Activated CD4-positive, alpha-beta T cell treated with anti-CD3 and anti-CD28 coated beads for 36 hours (primary cell): ENCODE measurements at regions of chr11 and their contacts with region 1.

Region 1: GRCh38 chr11:118791111-118791965 is at the start of gene DDX6:
- DNase-seq: peak; percentile 96
- ATAC-seq: peak; percentile 47
- H3K4me3 Mint-ChIP-seq: peak within 1 kb of the TSS; percentile 87
- H3K27ac Mint-ChIP-seq: peak within 1 kb of the TSS; percentile 93
- H3K4me1 Mint-ChIP-seq: peaks cover 26% of the 10 kb centered on the region
- H3K27me3 Mint-ChIP-seq: no peaks in the 10 kb centered on the region
- total RNA-seq, gene DDX6: 175 to 178 TPM

Region 2: DNA sequence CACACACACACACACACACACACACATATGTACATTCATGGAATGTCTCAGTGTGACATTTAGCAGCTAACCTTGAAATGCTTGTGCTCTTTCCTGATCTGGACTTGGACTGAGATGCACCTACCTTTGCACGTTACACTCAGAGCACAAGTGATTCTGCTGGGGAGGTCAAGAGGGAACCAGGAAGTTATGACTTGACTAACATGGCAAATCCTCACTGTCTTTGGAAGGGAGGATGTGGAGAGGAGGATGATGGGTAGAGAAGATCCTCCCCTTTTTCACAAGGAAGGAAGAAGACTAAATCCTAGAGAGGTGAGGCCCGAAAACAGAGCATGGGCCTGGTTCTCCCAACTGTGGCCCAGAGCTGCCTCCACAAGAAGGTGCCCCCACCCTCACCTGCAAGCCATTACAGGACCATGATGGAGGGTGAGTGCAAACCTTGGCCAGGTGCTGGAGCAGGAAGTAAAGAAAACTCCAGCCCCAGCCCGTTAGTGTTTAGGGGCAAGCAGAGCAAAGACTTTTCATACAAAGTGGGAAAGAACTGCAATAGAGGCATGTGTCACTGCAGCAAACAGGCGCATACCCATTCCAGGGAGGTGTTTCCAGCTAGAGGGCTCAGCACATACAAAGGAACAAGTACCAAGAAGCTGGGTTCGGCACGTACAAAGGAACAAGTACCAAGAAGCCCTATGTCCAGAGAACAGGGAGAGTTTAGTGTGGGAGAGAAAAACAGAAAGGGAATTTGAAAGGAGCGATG is 665.1 kb before region 1 on chr11:
- CTCF ChIA-PET with region 1: no interaction called
- POLR2A ChIA-PET with region 1: no interaction called
- intact Hi-C with region 1: no loop called
- DNase-seq: peak; percentile 20
- ATAC-seq: peak; percentile 78
- H3K4me3 Mint-ChIP-seq: no peak overlapping the region
- H3K27ac Mint-ChIP-seq: no peak overlapping the region
- H3K4me1 Mint-ChIP-seq: no peaks in the 10 kb centered on the region
- H3K27me3 Mint-ChIP-seq: peaks cover 2% of the 10 kb centered on the region

Region 3: GRCh38 chr11:118227865-118228785 is 563.2 kb before region 1 on chr11:
- CTCF ChIA-PET with region 1: no interaction called
- POLR2A ChIA-PET with region 1: no interaction called
- intact Hi-C with region 1: loop called in 1 of 2 experiments (anchors 5 kb)
- DNase-seq: no peak
- ATAC-seq: no peak
- H3K4me3 Mint-ChIP-seq: peak overlapping the region; percentile 15
- H3K27ac Mint-ChIP-seq: no peak overlapping the region
- H3K4me1 Mint-ChIP-seq: peaks cover 49% of the 10 kb centered on the region
- H3K27me3 Mint-ChIP-seq: no peaks in the 10 kb centered on the region

Region 4: GRCh38 chr11:118771547-118772288 is 19.6 kb before region 1 on chr11:
- CTCF ChIA-PET with region 1: interaction called, 10 read pairs
- POLR2A ChIA-PET with region 1: interaction called, 4 read pairs
- intact Hi-C with region 1: no loop called
- DNase-seq: no peak
- ATAC-seq: no peak
- H3K4me3 Mint-ChIP-seq: no peak overlapping the region
- H3K27ac Mint-ChIP-seq: peak overlapping the region; percentile 85
- H3K4me1 Mint-ChIP-seq: peaks cover 72% of the 10 kb centered on the region
- H3K27me3 Mint-ChIP-seq: no peaks in the 10 kb centered on the region

Region 5: GRCh38 chr11:118878163-118878563 is 86.8 kb after region 1 on chr11:
- CTCF ChIA-PET with region 1: interaction called, 22 read pairs
- POLR2A ChIA-PET with region 1: interaction called, 62 read pairs
- intact Hi-C with region 1: loop called (anchors 1 to 2 kb)
- DNase-seq: peak; percentile 54
- ATAC-seq: peak; percentile 17
- H3K4me3 Mint-ChIP-seq: peak overlapping the region; percentile 36
- H3K27ac Mint-ChIP-seq: peak overlapping the region; percentile 98
- H3K4me1 Mint-ChIP-seq: peaks cover 97% of the 10 kb centered on the region
- H3K27me3 Mint-ChIP-seq: no peaks in the 10 kb centered on the region

Region 6: DNA sequence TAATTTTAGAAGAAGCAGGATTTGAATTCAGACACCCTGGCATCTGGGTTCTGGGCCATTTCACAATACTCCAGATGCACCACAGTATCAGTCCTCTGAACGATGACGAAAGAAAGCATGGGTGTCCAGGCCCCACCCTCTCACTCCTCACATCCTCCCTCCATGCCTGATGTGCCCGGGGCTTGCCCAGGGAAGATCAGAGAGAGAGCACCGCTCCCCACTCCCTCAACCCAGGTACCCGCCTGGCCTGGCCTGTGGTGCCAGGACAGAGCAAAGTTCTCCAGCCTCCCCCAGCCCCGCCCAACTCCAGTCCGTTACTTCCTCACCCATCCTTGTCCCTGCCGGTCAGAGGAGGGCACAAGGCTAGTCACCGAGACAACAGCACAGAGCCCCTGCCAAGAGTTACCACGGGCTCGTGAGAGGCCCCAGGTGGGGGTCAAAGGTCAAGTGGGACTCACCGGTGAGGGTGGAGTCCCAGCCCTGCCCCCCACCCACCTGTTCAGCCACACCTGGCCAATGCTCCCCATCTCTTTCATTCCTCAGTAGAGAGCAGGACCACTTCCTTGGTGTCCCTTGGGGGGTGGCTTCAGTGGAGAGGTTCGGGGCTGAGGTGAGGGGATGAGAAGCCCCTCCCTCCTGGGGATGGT is 126.3 kb after region 1 on chr11:
- CTCF ChIA-PET with region 1: interaction called, 9 read pairs
- POLR2A ChIA-PET with region 1: interaction called, 10 read pairs
- intact Hi-C with region 1: no loop called
- DNase-seq: peak; percentile 81
- ATAC-seq: peak; percentile 48
- H3K4me3 Mint-ChIP-seq: peak overlapping the region; percentile 86
- H3K27ac Mint-ChIP-seq: peak overlapping the region; percentile 100
- H3K4me1 Mint-ChIP-seq: peaks cover 84% of the 10 kb centered on the region
- H3K27me3 Mint-ChIP-seq: no peaks in the 10 kb centered on the region

Region 7: GRCh38 chr11:119018074-119018938 is 227.0 kb after region 1 on chr11 and contains the starts of genes RPS25 and TRAPPC4:
- CTCF ChIA-PET with region 1: interaction called, 8 read pairs
- POLR2A ChIA-PET with region 1: no interaction called
- intact Hi-C with region 1: loop called in 1 of 2 experiments (anchors 1 kb)
- DNase-seq: peak; percentile 98
- ATAC-seq: peak; percentile 92
- H3K4me3 Mint-ChIP-seq: peak within 1 kb of the TSS; percentile 99
- H3K27ac Mint-ChIP-seq: peak within 1 kb of the TSS; percentile 99
- H3K4me1 Mint-ChIP-seq: peaks cover 53% of the 10 kb centered on the region
- H3K27me3 Mint-ChIP-seq: no peaks in the 10 kb centered on the region
- total RNA-seq, gene RPS25: 1,590 to 1,820 TPM
- total RNA-seq, gene TRAPPC4: 62.2 to 81.9 TPM

Region 8: DNA sequence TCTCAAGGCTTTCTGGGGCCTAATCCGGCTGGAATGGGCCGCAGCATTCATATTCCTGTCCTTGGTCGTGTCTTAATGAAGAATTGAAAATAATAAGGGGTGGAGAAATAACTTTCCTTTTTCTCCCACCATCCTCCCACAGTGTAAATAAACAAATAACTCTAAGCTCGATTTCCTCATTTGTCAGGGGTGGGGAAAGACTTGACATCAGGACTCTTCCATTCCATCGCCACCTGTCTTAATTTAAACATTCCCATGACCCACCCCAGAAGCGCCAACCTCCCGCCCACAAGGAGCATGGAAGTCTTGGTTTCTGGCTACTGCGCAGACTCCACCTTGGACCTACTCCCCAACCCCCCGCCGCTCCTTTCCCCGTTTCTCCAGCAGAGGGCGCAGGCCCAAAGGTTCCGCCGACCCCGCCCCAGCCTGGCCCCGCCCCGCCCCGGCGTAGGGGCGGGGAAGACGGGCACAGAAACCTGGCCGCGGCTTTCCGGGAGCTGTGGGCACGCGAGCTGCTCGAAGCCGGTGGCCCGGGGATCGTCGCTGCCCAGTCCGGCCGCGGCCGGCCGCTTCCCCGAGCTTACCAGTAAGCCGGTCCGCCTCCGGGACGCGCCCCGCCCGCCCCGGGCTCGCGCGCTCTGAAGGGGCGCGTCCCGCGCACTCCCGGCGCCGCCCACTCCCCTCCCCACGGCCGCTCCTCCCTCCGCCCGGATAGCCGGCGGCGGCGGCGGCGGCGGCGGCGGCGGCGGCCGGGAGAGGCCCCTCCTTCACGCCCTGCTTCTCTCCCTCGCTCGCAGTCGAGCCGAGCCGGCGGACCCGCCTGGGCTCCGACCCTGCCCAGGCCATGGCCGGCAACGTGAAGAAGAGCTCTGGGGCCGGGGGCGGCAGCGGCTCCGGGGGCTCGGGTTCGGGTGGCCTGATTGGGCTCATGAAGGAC is 414.5 kb after region 1 on chr11 and contains the start of gene CBL:
- CTCF ChIA-PET with region 1: no interaction called
- POLR2A ChIA-PET with region 1: no interaction called
- intact Hi-C with region 1: loop called in 1 of 2 experiments (anchors 2 kb)
- DNase-seq: peak; percentile 99
- ATAC-seq: peak; percentile 85
- H3K4me3 Mint-ChIP-seq: peak within 1 kb of the TSS; percentile 98
- H3K27ac Mint-ChIP-seq: peak within 1 kb of the TSS; percentile 94
- H3K4me1 Mint-ChIP-seq: peaks cover 27% of the 10 kb centered on the region
- H3K27me3 Mint-ChIP-seq: no peaks in the 10 kb centered on the region
- total RNA-seq, gene CBL: 29.3 to 33.2 TPM